H1 (cell line): ENCODE measurements at regions of chr19 and their contacts with region 1.

Region 1: DNA sequence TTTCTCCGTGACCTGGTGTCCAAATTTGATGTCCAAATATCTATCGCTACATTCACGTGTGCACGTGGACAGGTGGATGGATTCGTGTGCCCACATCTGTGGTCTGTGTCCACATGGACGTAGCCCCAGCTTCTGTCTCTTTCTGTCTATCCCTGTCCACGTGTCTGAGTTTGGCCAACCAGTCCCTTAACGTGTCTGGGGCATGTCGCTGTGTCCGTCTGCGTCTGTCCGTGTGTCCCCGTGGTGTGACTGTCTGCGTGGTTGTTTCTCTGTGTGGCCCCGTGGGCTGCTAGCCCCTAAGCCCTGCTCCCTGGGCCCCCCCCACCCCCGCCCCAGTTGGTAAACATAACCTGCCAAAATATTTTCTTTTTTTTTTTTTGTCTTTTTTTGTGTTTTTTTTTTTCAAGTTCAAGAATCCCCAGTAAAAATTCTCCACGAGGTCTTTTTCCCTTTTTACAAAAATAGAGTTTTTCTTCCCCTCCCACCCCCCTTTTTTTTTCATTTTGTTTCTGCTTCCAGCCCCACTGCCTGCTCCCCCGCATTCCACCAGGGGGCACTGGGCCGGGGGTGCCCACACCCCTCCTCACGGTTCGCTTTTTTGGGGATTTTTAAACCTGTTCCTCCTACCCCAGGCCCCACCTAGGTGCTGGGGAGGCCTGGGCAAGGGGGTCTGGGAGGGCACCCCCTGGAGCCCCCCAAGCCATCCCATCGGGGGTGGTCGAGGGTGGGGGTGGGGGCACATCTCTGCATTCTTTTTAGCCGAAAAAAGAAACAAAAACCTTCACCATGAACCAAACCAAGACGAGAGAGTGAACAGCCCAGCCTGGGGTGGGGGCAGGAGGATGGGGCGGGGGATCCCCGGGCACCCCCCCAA is 18.3 kb downstream of the PRKCSH start:
- DNase-seq: peak in 1 of 2 experiments; percentile 70
- H3K4me3 ChIP-seq: no peak overlapping the region
- H3K27ac ChIP-seq: no peak overlapping the region
- H3K4me1 ChIP-seq: peaks cover 2 to 21% (median 7%) of the 10 kb centered on the region in 4 experiments
- H3K27me3 ChIP-seq: no peaks in the 10 kb centered on the region
- CTCF ChIP-seq: peak; percentile 66 to 81 (median 69)
- EP300 ChIP-seq: no peak
- POLR2A ChIP-seq: no peak
- RAD21 ChIP-seq: peak; percentile 34 to 56; a peak in 3 of 4 replicates

Region 2: DNA sequence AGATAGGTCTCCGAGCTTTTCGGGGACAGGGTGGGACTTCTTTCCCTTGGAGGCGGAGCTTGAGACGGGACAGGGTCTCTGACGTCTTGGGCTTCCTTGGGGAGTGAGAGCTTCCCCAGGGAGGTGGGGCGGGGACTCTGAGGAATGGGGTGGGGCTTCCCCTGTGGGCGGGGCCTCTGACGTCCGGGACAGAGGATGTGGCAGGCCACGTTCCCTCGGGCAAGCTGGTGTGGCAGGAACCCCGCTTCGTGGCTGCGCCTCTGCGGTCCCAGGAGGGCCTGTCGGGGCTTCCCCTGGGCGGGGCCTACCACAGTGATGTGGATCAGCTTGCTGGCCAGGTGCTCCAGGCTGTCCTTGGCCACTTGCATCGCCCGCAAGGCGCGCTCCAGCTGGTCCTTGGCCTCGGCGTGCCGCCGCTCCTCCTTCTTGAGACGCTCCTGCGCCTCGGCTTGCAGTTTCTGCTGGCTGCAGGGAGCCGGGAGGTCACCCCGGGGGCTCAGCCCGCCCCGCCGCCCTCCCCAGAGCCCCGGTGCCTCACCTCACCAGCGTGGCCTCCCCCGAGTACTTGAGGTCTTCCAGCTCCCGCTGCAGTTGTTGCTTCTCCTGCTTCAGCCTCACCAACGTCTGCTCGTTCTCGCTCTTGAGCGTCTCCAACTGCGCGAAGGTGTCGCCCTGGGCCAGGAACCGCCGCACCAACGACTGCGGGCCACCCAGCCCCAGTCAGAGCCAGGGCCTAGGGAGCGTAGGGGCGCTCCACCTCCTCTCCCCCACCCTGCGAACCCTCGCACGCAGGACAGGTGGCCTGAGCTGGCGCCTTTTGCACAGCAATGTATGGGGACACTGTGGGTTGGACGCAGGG is 31.3 kb before region 1 on chr19:
- CTCF ChIA-PET with region 1: interaction called, 3 read pairs
- POLR2A ChIA-PET with region 1: interaction called, 11 read pairs
- DNase-seq: peak; percentile 88 to 99
- H3K4me3 ChIP-seq: peak overlapping the region; percentile 37 to 76 (median 53)
- H3K27ac ChIP-seq: no peak overlapping the region
- H3K4me1 ChIP-seq: peaks cover 0 to 14% (median 12%) of the 10 kb centered on the region in 4 experiments; a peak in 5 of 7 replicates
- H3K27me3 ChIP-seq: peaks cover 2 to 28% (median 21%) of the 10 kb centered on the region in 4 experiments
- CTCF ChIP-seq: no peak
- EP300 ChIP-seq: no peak
- POLR2A ChIP-seq: peak in 1 of 2 experiments; percentile 60; a peak in 2 of 3 replicates
- RAD21 ChIP-seq: no peak